ENCODE measurements at regions of chr22 and their contacts with region 1.

Region 1: DNA sequence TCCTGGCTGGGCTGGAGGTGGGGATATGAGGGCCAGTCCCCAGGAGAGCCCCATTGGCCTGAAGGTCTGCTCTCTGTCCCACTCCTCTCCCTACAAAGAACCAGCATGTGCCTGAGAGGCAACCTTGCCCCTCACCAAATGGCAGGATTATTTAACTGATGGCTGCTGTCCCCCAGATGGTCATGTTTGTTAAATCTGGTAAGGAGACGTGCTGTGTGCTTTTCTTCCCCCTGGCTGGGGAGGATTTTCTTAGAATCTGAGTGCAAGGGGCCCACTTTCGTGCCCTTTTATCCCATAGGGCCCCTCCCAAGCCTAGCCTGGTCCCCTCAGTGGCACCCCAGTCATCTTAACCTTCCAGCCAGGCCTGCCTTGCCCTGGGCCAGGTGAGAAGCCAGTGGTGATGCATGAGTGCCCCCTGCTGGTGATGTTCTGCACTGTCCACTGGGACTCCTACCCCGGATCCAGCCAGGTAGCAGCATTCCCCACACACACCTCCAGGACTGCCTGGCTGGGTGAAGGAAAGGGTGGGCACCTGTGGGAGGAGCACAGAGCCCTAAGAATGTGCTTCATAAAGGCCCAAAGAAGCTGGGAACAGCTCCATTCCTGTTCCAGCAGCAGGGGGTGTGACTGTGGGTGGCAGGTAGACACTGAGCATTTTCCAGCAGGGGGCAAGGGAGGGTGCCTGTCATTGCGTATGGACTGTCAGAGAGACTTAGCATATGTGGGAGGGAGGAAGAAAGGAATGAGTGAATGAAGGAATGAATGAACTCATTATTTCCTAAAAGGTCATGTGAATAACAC is 28.9 kb downstream of the MFNG start:
- DNase-seq: peak; percentile 93
- H3K4me3 ChIP-seq: no peak overlapping the region
- H3K27ac ChIP-seq: no peak overlapping the region
- H3K4me1 ChIP-seq: no peaks in the 10 kb centered on the region
- H3K27me3 ChIP-seq: peaks cover 0 to 13% (median 0%) of the 10 kb centered on the region in 7 donors
- CTCF ChIP-seq: peak; percentile 83 to 95 (median 88)
- POLR2A ChIP-seq: no peak

Region 2: DNA sequence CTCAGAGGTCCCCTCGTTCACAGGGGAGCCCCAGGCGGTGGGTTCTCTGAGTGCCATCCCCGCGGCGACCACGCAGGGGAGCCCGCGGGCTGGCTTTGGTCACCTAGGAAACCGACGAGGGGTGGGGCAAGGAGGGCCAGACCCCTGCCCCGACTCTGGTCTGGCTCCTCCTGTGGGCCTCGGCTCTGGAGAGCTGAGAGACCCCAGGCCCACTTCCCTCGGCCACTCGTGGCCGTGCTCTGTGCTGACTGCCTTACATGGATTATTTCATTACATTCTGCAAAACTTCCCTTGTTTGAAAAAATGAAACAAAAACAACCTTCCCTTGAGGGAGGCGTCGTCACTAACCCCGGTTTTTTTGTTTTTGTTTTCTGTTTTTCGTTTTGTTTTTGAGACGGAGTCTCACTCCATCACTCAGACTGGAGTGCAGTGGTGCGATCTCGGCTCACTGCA is 190.1 kb before region 1 on chr22:
- intact Hi-C with region 1: loop called (anchors 5 kb)
- DNase-seq: peak; percentile 93
- H3K4me3 ChIP-seq: peak overlapping the region; percentile 27 to 68 (median 46)
- H3K27ac ChIP-seq: peak overlapping the region; percentile 72 to 92 (median 82)
- H3K4me1 ChIP-seq: peaks cover 7 to 56% (median 37%) of the 10 kb centered on the region in 6 donors
- H3K27me3 ChIP-seq: peaks cover 0 to 8% (median 0%) of the 10 kb centered on the region in 7 donors
- CTCF ChIP-seq: peak; percentile 76 to 94 (median 92)
- POLR2A ChIP-seq: no peak

Region 3: GRCh38 chr22:37316875-37317371 is 140.4 kb before region 1 on chr22:
- intact Hi-C with region 1: loop called (anchors 2 kb)
- DNase-seq: peak; percentile 90
- H3K4me3 ChIP-seq: no peak overlapping the region
- H3K27ac ChIP-seq: peak overlapping the region in 2 of 8 donors; percentile 18 to 34
- H3K4me1 ChIP-seq: peaks cover 15 to 52% (median 36%) of the 10 kb centered on the region in 6 donors
- H3K27me3 ChIP-seq: no peaks in the 10 kb centered on the region
- CTCF ChIP-seq: peak; percentile 82 to 95 (median 92)
- POLR2A ChIP-seq: no peak

Region 4: DNA sequence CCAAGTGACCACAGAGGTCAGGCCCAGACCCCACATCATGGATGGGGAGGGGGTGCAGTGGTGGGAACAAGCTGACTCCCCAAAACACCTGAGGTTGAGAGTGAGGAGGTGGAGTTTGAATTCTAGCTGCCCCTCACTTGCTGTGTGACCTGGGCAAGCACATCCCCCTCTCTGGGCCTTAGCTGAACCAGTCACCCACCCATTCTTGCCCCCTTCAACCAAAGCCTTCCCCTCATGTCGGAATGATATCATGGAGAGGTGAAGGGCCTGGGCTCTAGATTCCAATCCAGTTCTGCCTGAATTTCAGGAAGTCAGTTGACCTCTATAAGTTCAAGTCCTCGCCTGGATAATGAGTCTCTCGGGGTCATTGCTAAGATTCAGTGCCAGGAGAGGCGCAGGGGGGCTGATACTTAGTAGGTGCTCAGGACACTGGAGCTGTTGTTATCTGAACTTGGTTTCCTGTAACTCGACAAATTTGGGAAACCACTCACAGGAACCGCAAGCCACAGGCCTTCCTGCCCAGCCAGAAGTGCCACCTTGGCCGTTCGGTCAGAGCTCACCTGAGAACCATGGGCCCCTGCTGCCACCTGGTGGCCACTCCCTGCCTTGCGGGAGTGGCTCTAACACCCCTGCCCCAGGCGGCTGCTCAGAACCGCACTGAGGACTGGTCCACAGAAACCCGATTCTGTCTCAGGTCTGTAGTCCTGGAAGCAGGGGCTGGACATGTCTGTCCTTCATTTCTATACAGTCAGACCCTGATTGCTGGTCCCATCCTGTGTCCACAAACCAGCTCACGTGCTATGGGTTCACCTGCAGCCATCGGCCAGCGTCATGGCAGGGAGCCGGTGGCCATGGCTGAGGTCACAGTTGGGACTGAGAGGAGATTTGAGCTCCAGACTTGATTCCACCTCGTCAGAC is 109.9 kb after region 1 on chr22:
- intact Hi-C with region 1: no loop called
- DNase-seq: peak; percentile 98
- H3K4me3 ChIP-seq: peak overlapping the region in 2 of 8 donors; percentile 9 to 53
- H3K27ac ChIP-seq: peak overlapping the region; percentile 19 to 90 (median 64)
- H3K4me1 ChIP-seq: peaks cover 21 to 70% (median 46%) of the 10 kb centered on the region in 6 donors
- H3K27me3 ChIP-seq: peaks cover 0 to 42% (median 5%) of the 10 kb centered on the region in 7 donors
- CTCF ChIP-seq: peak; percentile 97 to 99 (median 98)
- POLR2A ChIP-seq: no peak